CD4-positive, alpha-beta T cell (primary cell): ENCODE measurements at regions of chr12 and their contacts with region 1.

Region 1: DNA sequence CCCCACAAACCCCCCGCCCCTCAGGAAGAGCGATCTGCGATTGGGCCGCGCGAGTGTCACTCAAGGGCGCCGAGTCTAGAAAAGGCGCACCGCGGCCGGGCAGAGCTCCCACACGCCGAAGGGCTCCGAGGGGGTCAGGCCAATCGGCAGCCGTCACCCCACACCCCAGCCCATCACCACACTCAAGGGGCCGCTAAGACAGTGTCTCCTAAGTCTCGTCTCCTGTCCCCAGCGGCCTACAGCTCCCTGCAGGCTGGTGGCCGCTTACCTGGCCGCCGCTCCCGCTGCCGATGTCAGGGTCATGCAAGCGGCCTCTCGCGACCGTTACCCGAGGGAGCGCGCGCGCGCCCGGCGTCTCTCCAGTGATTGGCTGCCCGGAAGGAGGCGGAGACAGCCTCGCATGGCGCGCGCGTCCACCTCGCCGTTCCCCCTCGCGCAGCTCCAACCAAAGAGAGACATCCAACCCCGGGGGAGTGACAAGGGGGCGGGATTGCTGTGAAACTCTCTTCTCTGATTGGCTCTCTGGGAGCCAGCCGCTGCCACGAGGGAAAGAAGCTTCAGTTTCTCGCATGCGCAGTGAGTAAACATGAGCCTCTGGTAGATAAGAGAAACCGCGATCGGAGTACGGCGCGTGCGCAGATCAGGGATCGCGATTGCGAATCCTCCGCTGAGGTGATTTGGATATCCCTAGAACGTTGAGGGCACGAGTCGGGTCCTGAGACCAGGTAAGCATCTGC is at the starts of genes MPHOSPH9 and MTRFR:
- DNase-seq: peak; percentile 97 to 100 (median 98)
- ATAC-seq: peak; percentile 87
- H3K4me3 ChIP-seq: peak within 1 kb of the TSS; percentile 97
- H3K4me3 Mint-ChIP-seq: peak within 1 kb of the TSS; percentile 95
- H3K27ac ChIP-seq: peak within 1 kb of the TSS; percentile 85 to 91
- H3K27ac Mint-ChIP-seq: peak within 1 kb of the TSS; percentile 97
- H3K4me1 ChIP-seq: peaks cover 67% of the 10 kb centered on the region
- H3K4me1 Mint-ChIP-seq: peaks cover 76% of the 10 kb centered on the region
- H3K27me3 ChIP-seq: no peaks in the 10 kb centered on the region
- H3K27me3 Mint-ChIP-seq: no peaks in the 10 kb centered on the region
- CTCF ChIP-seq: no peak
- total RNA-seq, gene MPHOSPH9: 80.9 to 84.5 TPM
- total RNA-seq, gene MTRFR: 43.2 to 44.5 TPM

Region 2: DNA sequence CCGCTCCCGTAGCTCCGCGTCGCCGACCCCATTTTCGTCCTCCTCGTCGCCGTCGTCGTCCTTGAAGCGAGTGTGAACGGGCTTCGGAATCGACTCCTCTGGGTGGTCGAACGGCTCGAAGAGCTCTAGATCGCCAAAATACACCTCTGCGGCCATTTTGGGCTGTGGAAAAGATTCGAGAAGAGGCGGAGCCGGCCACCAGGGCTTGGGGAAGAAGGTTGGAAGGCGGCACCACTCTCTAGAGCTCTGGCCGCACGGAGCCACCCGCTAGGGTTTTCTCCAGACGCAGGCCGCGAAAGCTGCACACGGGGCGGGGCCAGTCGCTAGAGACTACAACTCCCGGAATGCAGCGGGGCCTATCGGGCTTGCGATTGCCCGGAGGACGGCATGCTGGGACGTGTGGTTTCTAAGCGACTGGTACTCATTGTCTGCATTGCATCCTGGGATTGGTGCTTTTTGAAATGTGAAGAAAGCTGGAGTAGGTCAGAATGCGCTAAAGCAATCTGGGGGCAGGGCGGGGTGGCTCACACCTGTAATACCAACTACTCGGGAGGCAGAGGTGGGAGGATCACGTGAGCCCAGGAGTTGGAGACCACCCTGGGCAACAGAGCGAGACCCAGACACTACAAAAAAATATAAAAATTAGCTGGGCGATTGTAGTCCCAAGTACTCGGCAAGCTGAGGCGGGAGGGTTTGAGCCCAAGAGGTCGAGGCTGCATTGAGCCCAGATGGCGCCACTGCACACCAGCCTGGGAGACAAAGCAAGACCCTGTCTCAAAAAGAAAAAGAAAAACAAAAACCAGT is 732.1 kb before region 1 on chr12 and contains the start of gene ZCCHC8:
- CTCF ChIA-PET with region 1: no interaction called
- POLR2A ChIA-PET with region 1: interaction called, 10 read pairs
- intact Hi-C with region 1: no loop called
- DNase-seq: peak; percentile 91 to 99 (median 96)
- ATAC-seq: peak; percentile 92
- H3K4me3 ChIP-seq: peak within 1 kb of the TSS; percentile 80
- H3K4me3 Mint-ChIP-seq: peak within 1 kb of the TSS; percentile 96
- H3K27ac ChIP-seq: peak within 1 kb of the TSS; percentile 88 to 89
- H3K27ac Mint-ChIP-seq: peak within 1 kb of the TSS; percentile 97
- H3K4me1 ChIP-seq: peaks cover 43% of the 10 kb centered on the region
- H3K4me1 Mint-ChIP-seq: peaks cover 49% of the 10 kb centered on the region
- H3K27me3 ChIP-seq: no peaks in the 10 kb centered on the region
- H3K27me3 Mint-ChIP-seq: no peaks in the 10 kb centered on the region
- CTCF ChIP-seq: no peak
- total RNA-seq, gene ZCCHC8: 49.4 to 54.8 TPM

Region 3: GRCh38 chr12:122860346-122861090 is 372.5 kb before region 1 on chr12:
- CTCF ChIA-PET with region 1: no interaction called
- POLR2A ChIA-PET with region 1: interaction called, 3 read pairs
- intact Hi-C with region 1: loop called (anchors 1 kb)
- DNase-seq: peak; percentile 72 to 89 (median 79)
- ATAC-seq: peak; percentile 52
- H3K4me3 ChIP-seq: no peak overlapping the region
- H3K4me3 Mint-ChIP-seq: no peak overlapping the region
- H3K27ac ChIP-seq: no peak overlapping the region
- H3K27ac Mint-ChIP-seq: peak overlapping the region; percentile 61
- H3K4me1 ChIP-seq: peaks cover 9% of the 10 kb centered on the region
- H3K4me1 Mint-ChIP-seq: no peaks in the 10 kb centered on the region
- H3K27me3 ChIP-seq: no peaks in the 10 kb centered on the region
- H3K27me3 Mint-ChIP-seq: no peaks in the 10 kb centered on the region
- CTCF ChIP-seq: peak; percentile 78

Region 4: DNA sequence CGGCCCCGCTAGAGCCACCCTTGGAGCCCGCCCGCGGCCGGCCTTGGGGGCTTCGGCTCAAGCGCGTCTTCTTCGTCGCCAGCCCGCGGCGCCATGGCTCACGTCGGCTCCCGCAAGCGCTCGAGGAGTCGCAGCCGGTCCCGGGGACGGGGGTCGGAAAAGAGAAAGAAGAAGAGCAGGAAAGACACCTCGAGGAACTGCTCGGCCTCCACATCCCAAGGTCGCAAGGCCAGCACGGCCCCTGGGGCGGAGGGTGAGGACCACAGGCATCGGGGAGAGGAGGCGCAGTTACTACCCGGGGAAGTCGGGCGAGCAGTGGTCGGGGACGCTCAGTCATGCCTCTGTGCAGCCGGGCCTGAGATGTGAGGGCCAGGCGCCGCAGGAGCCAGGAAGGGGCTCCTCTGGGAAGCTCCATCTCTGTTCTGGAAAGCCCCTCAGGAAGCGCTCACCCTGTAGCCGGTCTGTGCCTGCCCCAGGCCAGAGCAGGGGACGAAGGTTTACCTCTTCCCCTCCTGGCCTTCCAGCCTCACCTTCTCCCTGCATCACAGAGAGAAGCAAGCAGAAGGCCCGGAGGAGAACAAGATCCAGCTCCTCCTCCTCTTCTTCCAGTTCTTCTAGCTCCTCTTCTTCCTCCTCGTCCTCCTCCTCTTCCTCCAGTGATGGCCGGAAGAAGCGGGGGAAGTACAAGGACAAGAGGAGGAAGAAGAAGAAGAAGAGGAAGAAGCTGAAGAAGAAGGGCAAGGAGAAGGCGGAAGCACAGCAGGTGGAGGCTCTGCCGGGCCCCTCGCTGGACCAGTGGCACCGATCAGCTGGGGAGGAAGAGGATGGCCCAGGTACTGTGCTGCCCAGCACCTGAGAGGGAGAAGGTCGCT is 251.7 kb before region 1 on chr12:
- CTCF ChIA-PET with region 1: no interaction called
- POLR2A ChIA-PET with region 1: interaction called, 58 read pairs
- intact Hi-C with region 1: no loop called
- DNase-seq: peak in 4 of 14 experiments; percentile 20 to 53 (median 24)
- ATAC-seq: peak; percentile 32
- H3K4me3 ChIP-seq: peak overlapping the region; percentile 82
- H3K4me3 Mint-ChIP-seq: peak overlapping the region; percentile 94
- H3K27ac ChIP-seq: peak overlapping the region; percentile 68
- H3K27ac Mint-ChIP-seq: peak overlapping the region; percentile 92
- H3K4me1 ChIP-seq: peaks cover 81% of the 10 kb centered on the region
- H3K4me1 Mint-ChIP-seq: peaks cover 47% of the 10 kb centered on the region
- H3K27me3 ChIP-seq: no peaks in the 10 kb centered on the region
- H3K27me3 Mint-ChIP-seq: no peaks in the 10 kb centered on the region
- CTCF ChIP-seq: no peak

Region 5: GRCh38 chr12:123120452-123121166 is 112.4 kb before region 1 on chr12:
- CTCF ChIA-PET with region 1: interaction called, 3 read pairs
- POLR2A ChIA-PET with region 1: interaction called, 24 read pairs
- intact Hi-C with region 1: no loop called
- DNase-seq: peak in 13 of 14 experiments; percentile 21 to 65 (median 39)
- ATAC-seq: peak; percentile 60
- H3K4me3 ChIP-seq: no peak overlapping the region
- H3K4me3 Mint-ChIP-seq: peak overlapping the region; percentile 82
- H3K27ac ChIP-seq: peak overlapping the region; percentile 58 to 77
- H3K27ac Mint-ChIP-seq: peak overlapping the region; percentile 99
- H3K4me1 ChIP-seq: peaks cover 67% of the 10 kb centered on the region
- H3K4me1 Mint-ChIP-seq: peaks cover 77% of the 10 kb centered on the region
- H3K27me3 ChIP-seq: no peaks in the 10 kb centered on the region
- H3K27me3 Mint-ChIP-seq: no peaks in the 10 kb centered on the region
- CTCF ChIP-seq: no peak

Region 6: DNA sequence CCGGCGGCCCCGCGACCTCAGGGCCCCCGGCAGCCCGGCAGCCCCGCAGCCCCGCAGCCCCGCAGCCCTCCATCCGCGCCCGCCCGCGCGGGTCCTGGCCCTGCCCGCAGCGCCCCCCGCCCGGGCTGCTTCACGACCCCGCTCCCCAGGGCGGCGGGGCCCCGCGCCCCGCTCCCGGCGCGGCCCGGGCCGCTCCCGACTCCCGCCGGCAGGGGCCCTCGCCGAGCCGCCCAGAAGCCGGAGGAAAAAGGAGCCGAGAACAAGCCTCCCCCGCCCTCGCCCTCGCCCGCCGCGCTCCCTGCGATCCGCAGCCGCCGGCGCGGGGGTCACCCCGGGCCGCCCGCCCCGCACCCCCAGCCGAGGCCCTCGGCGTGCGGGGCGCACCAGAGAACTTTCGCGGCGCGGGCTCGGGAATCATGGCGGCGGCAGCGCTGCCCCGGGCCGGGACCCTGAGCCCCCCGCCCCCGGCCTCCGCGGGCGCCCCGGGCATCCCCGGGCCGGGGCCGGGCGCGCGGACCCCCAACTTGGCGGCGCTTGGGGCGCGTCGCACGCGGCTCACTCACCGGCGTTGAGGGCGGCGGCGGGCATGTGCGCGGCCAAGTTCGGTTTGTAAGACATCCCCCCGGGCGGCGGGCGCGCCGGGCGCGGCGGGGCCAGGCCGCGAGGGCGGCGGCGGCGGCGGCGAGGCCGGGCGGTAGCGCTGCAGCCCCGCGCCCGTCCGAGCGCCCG is 38.2 kb after region 1 on chr12:
- CTCF ChIA-PET with region 1: no interaction called
- POLR2A ChIA-PET with region 1: interaction called, 13 read pairs
- intact Hi-C with region 1: no loop called
- DNase-seq: peak; percentile 60 to 87 (median 72)
- ATAC-seq: peak; percentile 88
- H3K4me3 ChIP-seq: peak overlapping the region; percentile 41
- H3K4me3 Mint-ChIP-seq: no peak overlapping the region
- H3K27ac ChIP-seq: no peak overlapping the region
- H3K27ac Mint-ChIP-seq: no peak overlapping the region
- H3K4me1 ChIP-seq: peaks cover 38% of the 10 kb centered on the region
- H3K4me1 Mint-ChIP-seq: peaks cover 32% of the 10 kb centered on the region
- H3K27me3 ChIP-seq: no peaks in the 10 kb centered on the region
- H3K27me3 Mint-ChIP-seq: no peaks in the 10 kb centered on the region
- CTCF ChIP-seq: peak; percentile 10